ENCODE measurements at regions of chr6 and their contacts with region 1.

Region 1: GRCh38 chr6:73129653-73130443 is 95.4 kb downstream of the KHDC1L start:
- DNase-seq: peak; percentile 83

Region 2: DNA sequence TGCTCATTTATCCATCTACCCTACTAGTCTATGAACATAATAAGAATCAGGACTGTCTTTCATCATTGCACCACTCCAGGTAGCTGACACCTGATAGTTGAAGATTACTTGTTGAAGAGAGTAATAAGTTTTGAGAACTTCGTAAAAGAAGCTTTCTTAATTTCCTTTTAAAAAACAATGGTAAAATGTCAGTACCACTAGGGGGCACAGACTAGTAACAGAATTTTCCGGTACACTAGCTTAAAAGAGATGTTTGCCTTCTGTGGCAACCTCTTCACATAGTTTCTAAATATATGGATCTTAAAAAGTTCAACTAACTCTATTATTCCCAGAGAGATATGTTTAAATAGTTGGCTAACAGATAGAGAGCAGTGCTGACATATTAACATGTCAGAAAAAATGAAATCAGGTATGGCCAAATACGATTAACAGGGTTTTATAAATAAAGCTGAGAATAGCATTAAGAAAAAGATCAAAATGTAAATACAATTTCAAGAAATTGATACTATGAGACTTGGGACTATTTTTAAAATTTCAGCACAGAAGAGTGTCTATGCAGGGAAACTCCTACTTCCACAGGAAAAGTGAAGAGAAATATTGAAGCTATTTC is 513.3 kb before region 1 on chr6:
- CTCF ChIA-PET with region 1: interaction called, 31 read pairs
- POLR2A ChIA-PET with region 1: no interaction called
- DNase-seq: no peak

Measured in HEK293T (cell line).